Psoas muscle (tissue), 8 donors: ENCODE measurements at regions of chr1 and their contacts with region 1.

Region 1: DNA sequence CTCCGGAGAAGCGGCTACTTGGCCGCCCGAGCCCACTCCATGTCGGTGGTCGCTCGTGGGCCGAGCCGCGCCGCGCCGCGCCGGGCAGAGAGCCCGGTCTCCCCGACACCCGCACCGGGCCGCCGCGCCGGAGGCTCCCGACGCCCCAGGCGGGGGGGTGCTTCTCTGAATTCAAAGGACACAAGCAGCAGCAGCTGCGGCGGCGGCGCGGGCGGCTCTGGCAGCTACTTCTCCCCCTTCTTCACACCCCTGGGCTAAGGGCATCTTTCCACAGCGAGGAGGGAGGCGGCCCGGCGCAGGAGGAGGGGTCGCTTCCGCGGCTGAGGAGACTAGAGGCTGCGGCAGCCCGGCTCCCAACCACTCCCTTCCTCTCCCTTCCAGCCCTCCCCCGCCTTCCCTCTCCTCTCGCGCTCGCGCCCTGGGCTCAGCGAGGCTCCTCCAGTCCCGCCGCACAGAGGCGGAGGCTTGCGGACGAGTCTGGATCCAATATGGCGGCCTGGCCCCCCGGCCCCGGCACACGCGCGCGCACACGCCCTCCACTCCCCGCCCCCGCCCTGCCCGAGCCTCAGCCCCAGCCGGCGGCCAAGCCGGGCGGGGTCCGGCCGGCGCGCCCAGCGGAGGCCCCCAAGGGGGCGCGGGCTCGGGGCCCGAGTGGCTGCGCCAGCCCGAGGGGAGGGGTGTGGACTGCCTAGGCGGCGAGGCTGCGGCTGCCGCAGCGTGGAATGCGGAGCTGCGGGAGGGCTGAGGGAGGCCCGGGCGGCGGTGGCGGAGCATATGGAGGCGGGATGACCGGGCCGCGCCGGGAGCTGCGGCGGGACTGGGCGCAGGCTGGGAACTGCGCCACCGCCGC is at the start of gene CDC42BPA:
- DNase-seq: peak; percentile 86 to 91
- ATAC-seq: peak; percentile 78 to 84 (median 80)
- H3K4me3 ChIP-seq: peak within 1 kb of the TSS; percentile 81
- H3K27ac ChIP-seq: peak within 1 kb of the TSS; percentile 95
- H3K4me1 ChIP-seq: peaks cover 9% of the 10 kb centered on the region
- H3K27me3 ChIP-seq: no peaks in the 10 kb centered on the region
- CTCF ChIP-seq: no peak
- total RNA-seq, gene CDC42BPA: 14.1 to 23.0 (median 20.2) TPM

Region 2: DNA sequence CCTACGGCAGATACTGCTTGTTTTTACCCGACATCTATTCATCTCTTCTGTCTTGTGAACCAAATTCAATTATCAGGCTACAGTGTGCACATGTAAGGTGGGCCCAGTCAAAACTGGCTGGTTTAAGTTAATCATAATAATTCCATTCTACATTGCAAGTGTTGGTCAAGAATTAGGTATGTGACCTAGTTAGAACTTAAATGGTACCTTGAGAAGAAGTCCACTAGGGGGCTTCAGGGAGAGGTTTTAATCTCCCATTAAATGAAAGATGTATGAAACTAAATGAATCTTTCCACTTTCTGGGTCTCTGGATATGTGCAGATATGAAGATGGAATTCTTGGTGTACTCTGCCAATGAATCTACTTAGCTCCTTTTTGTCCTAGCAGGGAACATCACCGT is 187.0 kb before region 1 on chr1:
- intact Hi-C with region 1: loop called in 1 of 2 experiments (anchors 10 kb)
- DNase-seq: no peak
- ATAC-seq: peak in 2 of 4 donors; percentile 57 to 63
- H3K4me3 ChIP-seq: no peak overlapping the region
- H3K27ac ChIP-seq: no peak overlapping the region
- H3K4me1 ChIP-seq: no peaks in the 10 kb centered on the region
- H3K27me3 ChIP-seq: no peaks in the 10 kb centered on the region
- CTCF ChIP-seq: peak; percentile 49

Region 3: GRCh38 chr1:227245613-227246320 is 72.5 kb before region 1 on chr1:
- intact Hi-C with region 1: loop called (anchors 5 to 10 kb)
- DNase-seq: peak in 1 of 2 donors; percentile 33
- ATAC-seq: peak in 3 of 4 donors; percentile 44 to 82 (median 71)
- H3K4me3 ChIP-seq: no peak overlapping the region
- H3K27ac ChIP-seq: no peak overlapping the region
- H3K4me1 ChIP-seq: peaks cover 20% of the 10 kb centered on the region
- H3K27me3 ChIP-seq: no peaks in the 10 kb centered on the region
- CTCF ChIP-seq: no peak